CD8-positive, alpha-beta T cell (primary cell): ENCODE measurements at regions of chr5 and their contacts with region 1.

Region 1: DNA sequence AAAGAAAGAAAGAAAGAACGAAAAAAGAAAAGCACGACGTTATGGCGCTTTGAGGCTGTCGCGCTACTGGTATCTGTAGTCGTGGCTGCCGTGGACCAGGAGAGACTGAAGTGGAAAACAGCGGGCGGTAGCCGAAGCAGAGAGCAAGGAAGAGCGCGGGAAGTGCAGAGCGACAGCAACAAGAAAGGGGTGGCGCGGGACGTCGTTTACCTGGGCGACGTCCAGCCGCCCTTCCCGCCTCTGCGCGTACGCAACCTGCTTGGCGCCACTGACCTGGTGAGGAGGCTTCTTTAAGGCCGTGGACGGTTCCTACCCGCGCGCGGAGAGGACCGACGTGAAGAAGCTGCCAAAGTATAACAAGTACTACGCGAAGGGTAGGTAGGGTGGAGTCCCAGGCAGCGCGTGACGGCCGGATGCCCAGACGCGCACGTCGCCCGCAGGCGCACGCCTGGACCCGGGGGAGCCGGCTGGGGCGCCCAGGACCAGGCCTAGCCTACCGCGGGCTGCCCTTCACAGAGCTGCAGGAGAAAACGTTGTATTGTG is 15.4 kb downstream of the CCL28 start:
- DNase-seq: peak; percentile 40 to 80 (median 60)
- ATAC-seq: peak; percentile 93
- H3K4me3 ChIP-seq: peak overlapping the region; percentile 66 to 86
- H3K4me3 Mint-ChIP-seq: peak overlapping the region; percentile 94
- H3K27ac ChIP-seq: peak overlapping the region; percentile 77 to 78
- H3K27ac Mint-ChIP-seq: peak overlapping the region; percentile 96
- H3K4me1 ChIP-seq: peaks cover 18% of the 10 kb centered on the region
- H3K4me1 Mint-ChIP-seq: peaks cover 39% of the 10 kb centered on the region
- H3K27me3 ChIP-seq: no peaks in the 10 kb centered on the region
- H3K27me3 Mint-ChIP-seq: no peaks in the 10 kb centered on the region
- CTCF ChIP-seq: no peak

Region 2: GRCh38 chr5:43412156-43412555 is 15.3 kb after region 1 on chr5 and contains the start of gene CCL28:
- CTCF ChIA-PET with region 1: no interaction called
- POLR2A ChIA-PET with region 1: no interaction called
- intact Hi-C with region 1: loop called in 1 of 2 experiments (anchors 1 kb)
- DNase-seq: no peak
- ATAC-seq: no peak
- H3K4me3 ChIP-seq: no peak within 1 kb of the TSS
- H3K4me3 Mint-ChIP-seq: no peak within 1 kb of the TSS
- H3K27ac ChIP-seq: no peak within 1 kb of the TSS
- H3K27ac Mint-ChIP-seq: no peak within 1 kb of the TSS
- H3K4me1 ChIP-seq: no peaks in the 10 kb centered on the region
- H3K4me1 Mint-ChIP-seq: no peaks in the 10 kb centered on the region
- H3K27me3 ChIP-seq: no peaks in the 10 kb centered on the region
- H3K27me3 Mint-ChIP-seq: peaks cover 3% of the 10 kb centered on the region
- CTCF ChIP-seq: no peak
- total RNA-seq, gene CCL28: 19.5 to 20.9 TPM

Region 3: GRCh38 chr5:43548358-43548757 is 151.5 kb after region 1 on chr5:
- CTCF ChIA-PET with region 1: no interaction called
- POLR2A ChIA-PET with region 1: no interaction called
- intact Hi-C with region 1: no loop called
- DNase-seq: no peak
- ATAC-seq: no peak
- H3K4me3 ChIP-seq: no peak overlapping the region
- H3K4me3 Mint-ChIP-seq: no peak overlapping the region
- H3K27ac ChIP-seq: no peak overlapping the region
- H3K27ac Mint-ChIP-seq: peak overlapping the region; percentile 7
- H3K4me1 ChIP-seq: peaks cover 20% of the 10 kb centered on the region
- H3K4me1 Mint-ChIP-seq: peaks cover 35% of the 10 kb centered on the region
- H3K27me3 ChIP-seq: no peaks in the 10 kb centered on the region
- H3K27me3 Mint-ChIP-seq: no peaks in the 10 kb centered on the region
- CTCF ChIP-seq: no peak

Region 4: DNA sequence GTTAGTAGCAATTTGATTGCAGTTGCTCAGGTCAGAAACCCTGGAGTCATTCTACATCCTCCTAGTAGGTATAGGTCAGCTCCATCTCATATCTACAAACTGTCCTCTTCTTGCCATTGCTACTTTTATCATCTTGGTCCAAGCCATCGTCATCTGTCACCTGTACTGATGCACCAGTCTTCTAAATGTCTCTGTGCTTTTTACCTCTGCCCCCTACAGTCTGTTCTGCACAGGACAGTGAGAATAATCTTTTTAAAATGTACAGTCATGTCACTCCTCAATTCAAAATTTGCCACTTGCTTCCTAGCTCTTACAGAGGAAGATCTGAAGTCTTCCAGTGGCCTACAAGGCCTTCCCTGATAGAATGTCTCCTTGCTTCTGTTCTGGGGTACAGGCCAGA is 212.9 kb after region 1 on chr5:
- CTCF ChIA-PET with region 1: no interaction called
- POLR2A ChIA-PET with region 1: no interaction called
- intact Hi-C with region 1: loop called in 1 of 2 experiments (anchors 5 kb)
- DNase-seq: peak in 2 of 9 experiments; percentile 30 to 46
- ATAC-seq: peak; percentile 74
- H3K4me3 ChIP-seq: no peak overlapping the region
- H3K4me3 Mint-ChIP-seq: no peak overlapping the region
- H3K27ac ChIP-seq: no peak overlapping the region
- H3K27ac Mint-ChIP-seq: no peak overlapping the region
- H3K4me1 ChIP-seq: no peaks in the 10 kb centered on the region
- H3K4me1 Mint-ChIP-seq: peaks cover 45% of the 10 kb centered on the region
- H3K27me3 ChIP-seq: no peaks in the 10 kb centered on the region
- H3K27me3 Mint-ChIP-seq: no peaks in the 10 kb centered on the region
- CTCF ChIP-seq: no peak

Region 5: GRCh38 chr5:44808435-44809214 is 1411.8 kb after region 1 on chr5 and contains the start of gene MRPS30:
- CTCF ChIA-PET with region 1: no interaction called
- POLR2A ChIA-PET with region 1: no interaction called
- intact Hi-C with region 1: loop called in 1 of 2 experiments (anchors 5 kb)
- DNase-seq: peak; percentile 78 to 98 (median 89)
- ATAC-seq: peak; percentile 93
- H3K4me3 ChIP-seq: peak within 1 kb of the TSS; percentile 88 to 94
- H3K4me3 Mint-ChIP-seq: peak within 1 kb of the TSS; percentile 91
- H3K27ac ChIP-seq: peak within 1 kb of the TSS; percentile 88 to 89
- H3K27ac Mint-ChIP-seq: peak within 1 kb of the TSS; percentile 94
- H3K4me1 ChIP-seq: peaks cover 22% of the 10 kb centered on the region
- H3K4me1 Mint-ChIP-seq: peaks cover 36% of the 10 kb centered on the region
- H3K27me3 ChIP-seq: peaks cover 0 to 3% of the 10 kb centered on the region in 2 experiments
- H3K27me3 Mint-ChIP-seq: peaks cover 6% of the 10 kb centered on the region
- CTCF ChIP-seq: peak; percentile 48
- total RNA-seq, gene MRPS30: 51.5 to 52.4 TPM